ENCODE measurements at regions of chr16 and their contacts with region 1.

Region 1: DNA sequence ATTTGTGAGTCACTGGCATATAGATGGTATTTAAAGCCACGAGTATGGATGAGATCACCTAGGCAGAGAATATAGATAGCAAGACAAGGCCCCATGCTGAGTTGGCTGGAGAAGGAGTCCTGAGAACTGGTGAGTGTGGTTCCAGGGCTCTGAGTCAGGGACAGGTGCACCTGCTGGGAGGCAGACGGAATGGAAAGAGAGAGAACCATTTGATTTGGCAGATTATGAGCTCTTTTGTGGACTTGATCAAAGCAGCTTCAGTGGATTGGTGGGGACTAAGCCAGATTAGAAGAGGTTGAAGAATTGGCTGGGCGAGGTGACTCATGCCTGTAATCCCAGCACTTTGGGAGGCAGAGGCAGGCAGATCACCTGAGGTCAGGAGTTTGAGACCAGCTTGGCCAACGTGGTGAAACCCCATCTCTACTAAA is 4.3 kb upstream of the C16orf92 start:
- DNase-seq: no peak
- H3K4me3 ChIP-seq: no peak overlapping the region
- H3K27ac ChIP-seq: no peak overlapping the region
- H3K4me1 ChIP-seq: peaks cover 0 to 10% (median 4%) of the 10 kb centered on the region in 4 donors
- H3K27me3 ChIP-seq: no peaks in the 10 kb centered on the region
- CTCF ChIP-seq: no peak
- EP300 ChIP-seq: no peak
- POLR2A ChIP-seq: no peak

Region 2: GRCh38 chr16:28258567-28258966 is 1760.2 kb before region 1 on chr16:
- in situ Hi-C with region 1: no loop called
- intact Hi-C with region 1: loop called (anchors 5 kb)
- DNase-seq: no peak
- H3K4me3 ChIP-seq: no peak overlapping the region
- H3K27ac ChIP-seq: no peak overlapping the region
- H3K4me1 ChIP-seq: no peaks in the 10 kb centered on the region
- H3K27me3 ChIP-seq: peaks cover 35% of the 10 kb centered on the region
- CTCF ChIP-seq: no peak
- EP300 ChIP-seq: no peak
- POLR2A ChIP-seq: no peak

Region 3: GRCh38 chr16:29915590-29916247 is 103.0 kb before region 1 on chr16:
- in situ Hi-C with region 1: no loop called
- intact Hi-C with region 1: no loop called
- DNase-seq: no peak
- H3K4me3 ChIP-seq: no peak overlapping the region
- H3K27ac ChIP-seq: no peak overlapping the region
- H3K4me1 ChIP-seq: no peaks in the 10 kb centered on the region
- H3K27me3 ChIP-seq: no peaks in the 10 kb centered on the region
- CTCF ChIP-seq: no peak
- EP300 ChIP-seq: no peak
- POLR2A ChIP-seq: no peak

Region 4: GRCh38 chr16:29951625-29952365 is 67.0 kb before region 1 on chr16:
- in situ Hi-C with region 1: no loop called
- intact Hi-C with region 1: no loop called
- DNase-seq: no peak
- H3K4me3 ChIP-seq: no peak overlapping the region
- H3K27ac ChIP-seq: no peak overlapping the region
- H3K4me1 ChIP-seq: no peaks in the 10 kb centered on the region
- H3K27me3 ChIP-seq: no peaks in the 10 kb centered on the region
- CTCF ChIP-seq: no peak
- EP300 ChIP-seq: no peak
- POLR2A ChIP-seq: no peak

Region 5: GRCh38 chr16:30065143-30065850 is 46.6 kb after region 1 on chr16 and contains the start of gene ALDOA:
- in situ Hi-C with region 1: no loop called
- intact Hi-C with region 1: no loop called
- DNase-seq: peak; percentile 97
- H3K4me3 ChIP-seq: peak within 1 kb of the TSS; percentile 74 to 94 (median 82)
- H3K27ac ChIP-seq: peak within 1 kb of the TSS; percentile 91 to 99 (median 98)
- H3K4me1 ChIP-seq: peaks cover 41 to 60% (median 51%) of the 10 kb centered on the region in 4 donors
- H3K27me3 ChIP-seq: no peaks in the 10 kb centered on the region
- CTCF ChIP-seq: peak in 2 of 5 experiments; percentile 11 to 29
- EP300 ChIP-seq: no peak
- POLR2A ChIP-seq: peak; percentile 99
- total RNA-seq, gene ALDOA: 778 to 1,392 (median 1,174) TPM

Region 6: DNA sequence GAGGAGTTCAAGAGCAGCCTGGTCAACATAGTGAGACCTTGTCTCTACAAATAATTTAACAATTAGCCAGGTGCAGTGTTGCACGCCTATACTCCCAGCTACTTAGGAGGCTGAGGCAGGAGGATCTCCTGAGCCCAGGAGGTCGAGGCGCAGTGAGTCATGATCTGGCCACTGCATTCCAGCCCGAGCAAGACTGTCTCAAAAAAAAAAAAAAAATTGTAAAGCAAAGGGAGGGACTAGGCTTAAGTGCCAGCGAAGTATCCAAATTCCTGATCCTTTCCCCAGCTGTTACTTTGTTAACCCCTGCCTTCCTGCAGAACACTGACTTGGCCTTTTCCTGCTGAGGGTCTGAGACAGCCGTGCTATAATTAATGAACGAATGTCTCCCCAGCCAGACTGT is 91.9 kb after region 1 on chr16:
- in situ Hi-C with region 1: no loop called
- intact Hi-C with region 1: no loop called
- DNase-seq: no peak
- H3K4me3 ChIP-seq: no peak overlapping the region
- H3K27ac ChIP-seq: no peak overlapping the region
- H3K4me1 ChIP-seq: peaks cover 21 to 26% (median 23%) of the 10 kb centered on the region in 4 donors
- H3K27me3 ChIP-seq: no peaks in the 10 kb centered on the region
- CTCF ChIP-seq: no peak
- EP300 ChIP-seq: no peak
- POLR2A ChIP-seq: no peak

Measured in transverse colon (tissue), 4 donors.